ENCODE measurements at regions of chr1 and their contacts with region 1.

Region 1: DNA sequence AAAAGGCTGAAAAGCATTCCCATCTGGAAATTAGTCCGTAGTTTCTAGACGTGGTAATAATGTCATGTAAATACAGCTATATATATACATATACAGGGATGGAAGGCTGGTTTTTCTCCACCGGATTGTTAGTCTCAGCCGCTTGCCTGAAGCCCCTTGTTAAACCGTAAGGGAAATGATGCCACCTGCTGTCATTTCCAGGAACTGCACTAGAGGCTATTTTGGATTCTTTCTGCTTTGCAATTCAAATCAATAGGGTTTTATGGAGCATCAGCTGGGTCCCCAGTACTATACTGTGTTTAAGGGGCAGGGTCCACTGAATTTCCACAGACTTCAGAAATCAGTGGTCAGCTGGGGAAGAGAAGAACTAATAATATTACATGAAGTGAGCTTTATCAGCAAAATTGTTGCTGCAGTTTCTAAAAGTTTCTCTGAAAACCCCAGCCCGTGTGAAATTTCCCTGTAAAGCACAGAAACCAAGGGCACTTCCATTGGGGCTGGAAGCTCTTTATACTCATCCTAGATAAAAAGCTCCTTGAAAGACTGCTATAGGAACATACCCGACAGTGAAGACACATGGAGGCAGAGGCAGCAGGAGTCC is 33.8 kb upstream of the MPZL1 start:
- DNase-seq: peak; percentile 78
- CTCF ChIP-seq: peak; percentile 87

Region 2: DNA sequence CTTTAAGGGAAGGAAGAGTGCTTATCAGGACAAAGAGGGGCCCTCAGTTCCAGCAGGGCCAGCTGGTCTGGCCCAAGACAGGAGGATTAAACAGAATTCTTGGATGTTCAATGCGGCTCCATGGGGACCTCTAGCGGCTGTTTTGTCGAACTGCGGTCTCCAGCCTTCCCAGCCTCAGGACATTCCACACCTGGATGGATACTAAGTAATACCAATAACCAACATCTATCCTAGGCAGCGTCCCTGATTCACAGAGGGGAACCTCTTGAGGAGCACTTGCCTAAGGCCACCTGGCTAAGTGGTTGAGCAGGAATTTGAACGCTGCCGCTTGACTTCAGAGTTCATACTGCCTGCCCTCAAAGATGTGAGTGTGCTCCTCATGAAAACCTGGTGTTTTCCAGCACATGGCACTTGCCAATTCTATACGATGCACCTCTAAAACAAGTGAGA is 154.1 kb before region 1 on chr1:
- CTCF ChIA-PET with region 1: interaction called, 10 read pairs
- POLR2A ChIA-PET with region 1: no interaction called
- DNase-seq: peak; percentile 81
- CTCF ChIP-seq: peak; percentile 89

Region 3: GRCh38 chr1:167563579-167564246 is 124.3 kb before region 1 on chr1:
- CTCF ChIA-PET with region 1: interaction called, 27 read pairs
- POLR2A ChIA-PET with region 1: no interaction called
- DNase-seq: no peak
- CTCF ChIP-seq: no peak

Region 4: DNA sequence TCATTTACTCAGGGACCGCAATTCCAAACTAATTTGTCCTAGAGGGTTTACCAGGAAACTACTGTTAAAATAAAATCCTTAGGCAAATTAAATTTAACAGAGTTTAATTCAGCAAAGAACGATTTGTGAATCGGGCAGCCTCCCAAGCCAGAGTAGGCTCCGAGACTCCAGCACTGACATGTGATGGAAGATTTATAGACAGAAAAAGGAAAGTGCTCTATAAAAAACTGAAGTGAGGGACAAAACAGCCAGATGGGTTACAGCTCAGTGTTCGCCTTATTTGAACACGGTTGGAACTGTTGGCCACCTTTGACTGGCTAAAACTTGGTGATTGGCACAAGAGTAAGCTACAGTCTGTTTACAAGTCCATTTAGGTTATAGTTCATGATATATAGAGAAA is 93.2 kb before region 1 on chr1:
- CTCF ChIA-PET with region 1: interaction called, 102 read pairs
- POLR2A ChIA-PET with region 1: no interaction called
- DNase-seq: no peak
- CTCF ChIP-seq: no peak

Region 5: DNA sequence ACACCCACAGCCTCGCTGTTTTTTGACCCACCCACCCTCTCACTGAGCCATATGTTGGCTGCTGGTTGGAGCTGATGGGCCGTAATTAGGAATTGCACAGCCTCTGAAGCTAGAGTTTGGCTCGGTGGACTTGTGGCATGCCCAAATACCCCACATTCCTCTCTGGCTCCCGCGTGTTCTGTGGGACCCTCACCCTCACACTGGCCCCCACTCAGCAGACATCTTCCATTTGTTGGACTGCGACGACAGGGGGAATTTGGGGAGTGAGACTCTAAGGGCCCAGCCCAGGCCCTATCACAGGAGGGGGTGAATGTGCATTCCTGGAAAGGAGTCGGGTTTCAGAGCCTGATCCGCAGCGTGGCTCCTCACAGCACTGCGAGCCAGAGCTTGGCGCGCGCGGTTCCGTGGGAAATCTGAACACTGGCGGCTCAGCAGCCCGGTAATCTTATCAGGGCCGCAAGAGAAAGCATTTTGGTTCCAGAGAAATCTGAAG is 52.8 kb before region 1 on chr1:
- CTCF ChIA-PET with region 1: interaction called, 17 read pairs
- POLR2A ChIA-PET with region 1: no interaction called
- DNase-seq: no peak
- CTCF ChIP-seq: no peak

Region 6: GRCh38 chr1:167669209-167670124 is 18.6 kb before region 1 on chr1:
- CTCF ChIA-PET with region 1: interaction called, 32 read pairs
- POLR2A ChIA-PET with region 1: no interaction called
- DNase-seq: no peak
- CTCF ChIP-seq: no peak

Region 7: DNA sequence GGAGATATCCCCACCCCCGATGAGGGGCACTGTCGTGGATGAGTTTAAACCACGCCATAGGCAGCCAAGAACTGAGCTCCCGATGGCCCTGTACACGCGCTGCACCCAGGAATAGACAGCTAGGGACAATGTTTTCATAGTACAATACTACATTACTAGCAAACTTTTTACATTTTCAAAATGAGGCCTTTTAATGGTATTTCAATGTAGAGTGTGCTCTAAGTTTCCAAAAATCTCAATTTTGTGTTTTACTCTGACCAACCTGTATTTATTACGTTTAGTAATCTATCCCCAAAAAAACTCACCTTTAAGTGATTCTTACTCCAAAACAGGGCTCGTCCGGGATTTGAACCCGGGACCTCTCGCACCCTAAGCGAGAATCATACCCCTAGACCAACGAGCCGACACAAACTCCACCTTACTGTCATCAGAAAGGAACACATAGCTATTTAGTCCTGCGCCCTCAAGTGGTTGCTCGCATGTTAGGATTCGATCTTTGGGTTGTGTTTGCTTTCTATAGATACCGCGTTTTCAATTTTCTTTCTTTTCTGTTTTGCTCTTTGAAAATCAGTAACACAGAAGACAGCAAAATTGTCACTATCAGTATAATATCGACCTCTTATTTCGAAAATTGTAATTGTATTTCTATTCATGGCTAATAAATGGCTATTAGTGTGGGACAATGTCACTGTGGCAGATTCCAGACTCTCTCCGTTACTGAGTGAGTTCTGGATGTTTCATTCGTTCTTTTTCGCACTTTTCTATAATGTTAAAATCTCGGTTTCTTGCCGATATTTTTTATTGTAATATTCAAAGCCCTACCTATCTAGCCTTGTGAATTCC is 27.4 kb after region 1 on chr1:
- CTCF ChIA-PET with region 1: interaction called, 30 read pairs
- POLR2A ChIA-PET with region 1: interaction called, 3 read pairs
- DNase-seq: peak; percentile 76
- CTCF ChIP-seq: peak; percentile 90

Region 8: GRCh38 chr1:168112673-168113305 is 424.8 kb after region 1 on chr1:
- CTCF ChIA-PET with region 1: no interaction called
- POLR2A ChIA-PET with region 1: no interaction called
- DNase-seq: peak; percentile 43
- CTCF ChIP-seq: no peak